T-cell (primary cell): ENCODE measurements at regions of chr19 and their contacts with region 1.

Region 1: DNA sequence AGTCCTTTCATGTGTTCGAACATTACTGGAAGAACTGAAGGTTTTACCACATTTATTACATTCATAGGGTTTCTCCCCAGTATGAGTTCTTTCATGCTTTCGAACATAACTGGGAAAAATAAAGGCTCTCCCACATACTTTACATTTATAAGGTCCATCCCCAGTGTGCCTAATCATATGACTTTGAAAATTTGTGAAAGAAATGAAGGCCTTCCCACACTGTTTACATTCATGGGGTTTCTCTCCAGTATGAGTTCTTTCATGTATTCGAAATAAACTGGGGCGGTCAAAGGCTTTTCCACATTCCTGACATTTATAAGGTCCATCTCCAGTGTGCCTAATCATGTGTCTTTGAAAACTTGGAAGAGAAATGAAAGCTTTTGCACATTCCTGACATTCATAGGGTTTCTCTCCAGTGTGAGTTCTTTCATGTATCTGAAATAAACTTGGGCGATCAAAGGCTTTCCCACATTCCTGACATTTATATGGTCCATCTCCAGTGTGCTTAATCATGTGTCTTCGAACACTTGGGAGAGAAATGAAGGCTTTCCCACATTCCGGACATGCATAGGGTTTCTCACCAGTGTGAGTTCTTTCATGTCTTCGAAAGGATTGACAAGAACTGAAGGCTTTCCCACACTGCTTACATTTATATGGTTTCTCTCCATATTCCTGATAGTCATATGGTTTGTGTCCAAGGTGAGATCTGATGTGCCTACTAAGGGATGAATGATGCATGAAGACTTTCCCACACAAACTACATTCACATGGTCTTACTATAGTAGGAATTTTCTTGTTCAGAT is 24.0 kb downstream of the ZNF564 start:
- DNase-seq: no peak
- ATAC-seq: no peak
- H3K4me3 ChIP-seq: no peak overlapping the region
- H3K4me3 Mint-ChIP-seq: peak overlapping the region in 2 of 3 donors; percentile 15 to 17
- H3K27ac ChIP-seq: no peak overlapping the region
- H3K27ac Mint-ChIP-seq: no peak overlapping the region
- H3K4me1 ChIP-seq: no peaks in the 10 kb centered on the region
- H3K4me1 Mint-ChIP-seq: peaks cover 0 to 6% (median 1%) of the 10 kb centered on the region in 3 donors
- H3K27me3 ChIP-seq: no peaks in the 10 kb centered on the region
- H3K27me3 Mint-ChIP-seq: no peaks in the 10 kb centered on the region

Region 2: DNA sequence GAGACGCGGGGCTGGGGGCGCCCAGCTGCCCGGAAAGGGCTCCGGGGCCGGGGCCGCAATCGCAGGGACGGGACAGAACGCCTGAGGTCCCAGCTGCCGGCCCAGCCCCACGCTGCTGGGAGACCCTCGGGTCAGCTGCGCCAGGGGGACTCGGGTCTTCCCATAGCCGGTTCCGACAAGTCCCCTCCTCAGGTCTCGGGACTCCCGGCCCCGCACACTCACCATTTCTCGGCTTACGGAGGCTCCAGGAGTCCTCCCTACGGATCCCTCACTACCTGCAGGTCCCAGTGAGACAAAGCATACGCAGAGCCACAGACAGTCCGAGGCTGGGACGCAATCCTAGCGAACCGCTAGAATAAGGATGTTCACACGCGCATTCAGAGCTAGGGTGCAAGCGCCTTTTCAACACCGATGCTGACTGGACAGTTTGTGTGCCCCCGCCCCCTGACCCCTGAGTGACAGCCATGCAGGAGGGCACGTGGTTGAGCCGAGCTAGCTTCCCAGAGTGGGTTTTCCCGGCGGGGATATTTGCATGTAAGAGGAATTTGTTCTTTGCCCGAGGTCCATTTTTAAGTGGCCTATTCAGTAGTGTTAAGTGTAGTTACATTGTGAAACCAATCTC is 69.8 kb after region 1 on chr19:
- CTCF ChIA-PET with region 1: no interaction called
- POLR2A ChIA-PET with region 1: interaction called in 1 of 2 experiments, 10 read pairs
- DNase-seq: no peak
- ATAC-seq: no peak
- H3K4me3 ChIP-seq: no peak overlapping the region
- H3K4me3 Mint-ChIP-seq: no peak overlapping the region
- H3K27ac ChIP-seq: no peak overlapping the region
- H3K27ac Mint-ChIP-seq: no peak overlapping the region
- H3K4me1 ChIP-seq: no peaks in the 10 kb centered on the region
- H3K4me1 Mint-ChIP-seq: peaks cover 0 to 6% (median 0%) of the 10 kb centered on the region in 3 donors
- H3K27me3 ChIP-seq: no peaks in the 10 kb centered on the region
- H3K27me3 Mint-ChIP-seq: no peaks in the 10 kb centered on the region

Region 3: DNA sequence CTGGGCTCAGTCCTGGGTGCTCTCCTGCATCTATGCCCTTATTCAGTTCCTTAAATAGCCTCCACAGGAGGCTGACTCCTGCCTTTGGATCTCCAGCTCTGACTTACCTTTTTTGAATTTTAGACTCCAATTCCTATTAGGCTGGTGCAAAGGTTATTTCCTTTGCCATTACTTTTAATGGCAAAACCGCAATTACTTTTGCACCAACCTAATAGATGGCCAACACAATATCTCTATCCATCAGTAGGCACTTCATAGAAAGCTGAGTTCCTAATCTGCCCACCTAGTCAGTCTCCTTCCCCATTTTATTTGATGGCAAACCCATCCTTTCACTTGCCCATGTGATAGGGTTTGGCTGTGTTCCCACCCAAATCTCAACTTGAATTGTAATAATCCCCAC is 883.7 kb after region 1 on chr19:
- CTCF ChIA-PET with region 1: interaction called in 1 of 2 experiments, 10 read pairs
- POLR2A ChIA-PET with region 1: no interaction called
- DNase-seq: no peak
- ATAC-seq: no peak
- H3K4me3 ChIP-seq: no peak overlapping the region
- H3K4me3 Mint-ChIP-seq: no peak overlapping the region
- H3K27ac ChIP-seq: no peak overlapping the region
- H3K27ac Mint-ChIP-seq: no peak overlapping the region
- H3K4me1 ChIP-seq: no peaks in the 10 kb centered on the region
- H3K4me1 Mint-ChIP-seq: no peaks in the 10 kb centered on the region
- H3K27me3 ChIP-seq: peaks cover 0 to 21% of the 10 kb centered on the region in 2 experiments
- H3K27me3 Mint-ChIP-seq: peaks cover 25 to 31% of the 10 kb centered on the region in 2 donors